Tibial artery (tissue), 4 donors: ENCODE measurements at regions of chr11 and their contacts with region 1.

Region 1: DNA sequence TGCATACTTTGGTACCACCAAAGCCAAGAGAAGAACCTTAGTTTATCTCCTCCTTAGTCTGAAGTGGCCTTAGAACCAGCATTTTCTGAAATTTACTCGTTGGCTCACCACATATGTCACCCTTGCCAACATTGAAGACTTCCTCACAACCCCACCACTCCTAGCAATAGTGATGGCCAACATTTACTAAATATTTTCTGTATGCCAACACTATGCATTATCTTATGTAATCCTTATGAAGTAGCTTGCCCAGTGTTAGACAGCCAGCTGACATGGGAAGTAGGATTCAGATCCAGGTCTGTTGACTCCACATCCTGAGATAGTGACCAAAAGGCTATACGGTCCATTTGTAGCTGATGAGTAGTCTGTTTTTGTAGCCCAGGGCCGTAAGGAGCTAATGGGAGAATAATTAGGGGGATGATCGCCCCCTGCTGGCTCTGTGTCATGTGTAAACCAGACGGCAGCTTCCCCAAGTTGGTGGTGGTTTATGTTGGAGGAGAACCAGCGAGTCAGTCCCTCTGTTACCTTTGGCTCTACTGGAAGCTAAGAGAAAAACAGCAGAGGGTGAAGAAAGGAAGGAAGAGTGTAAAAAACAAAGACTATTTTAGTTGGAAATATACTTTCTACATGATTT is 120.5 kb upstream of the RASSF10 start:
- DNase-seq: peak; percentile 94 to 95
- H3K4me3 ChIP-seq: peak overlapping the region in 1 of 2 donors; percentile 25
- H3K27ac ChIP-seq: peak overlapping the region; percentile 83 to 85
- H3K4me1 ChIP-seq: peaks cover 0 to 33% (median 27%) of the 10 kb centered on the region in 4 donors
- H3K27me3 ChIP-seq: no peaks in the 10 kb centered on the region
- CTCF ChIP-seq: peak; percentile 73 to 86

Region 2: GRCh38 chr11:12331239-12331874 is 557.3 kb before region 1 on chr11:
- intact Hi-C with region 1: loop called (anchors 2 kb)
- DNase-seq: peak; percentile 80 to 86
- H3K4me3 ChIP-seq: no peak overlapping the region
- H3K27ac ChIP-seq: no peak overlapping the region
- H3K4me1 ChIP-seq: peaks cover 0 to 8% (median 0%) of the 10 kb centered on the region in 4 donors
- H3K27me3 ChIP-seq: no peaks in the 10 kb centered on the region
- CTCF ChIP-seq: peak; percentile 74 to 90

Region 3: GRCh38 chr11:12599408-12600143 is 289.1 kb before region 1 on chr11:
- intact Hi-C with region 1: loop called (anchors 5 kb)
- DNase-seq: peak; percentile 35 to 70
- H3K4me3 ChIP-seq: no peak overlapping the region
- H3K27ac ChIP-seq: no peak overlapping the region
- H3K4me1 ChIP-seq: no peaks in the 10 kb centered on the region
- H3K27me3 ChIP-seq: no peaks in the 10 kb centered on the region
- CTCF ChIP-seq: peak; percentile 65 to 68

Region 4: GRCh38 chr11:12673924-12674570 is 214.6 kb before region 1 on chr11 and contains the start of gene TEAD1:
- intact Hi-C with region 1: loop called (anchors 2 kb)
- DNase-seq: peak; percentile 89 to 98
- H3K4me3 ChIP-seq: peak within 1 kb of the TSS; percentile 70 to 79
- H3K27ac ChIP-seq: peak within 1 kb of the TSS; percentile 88 to 91
- H3K4me1 ChIP-seq: peaks cover 0 to 29% (median 13%) of the 10 kb centered on the region in 4 donors
- H3K27me3 ChIP-seq: no peaks in the 10 kb centered on the region
- CTCF ChIP-seq: no peak

Region 5: GRCh38 chr11:12813371-12814225 is 75.0 kb before region 1 on chr11:
- intact Hi-C with region 1: loop called (anchors 10 kb)
- DNase-seq: no peak
- H3K4me3 ChIP-seq: no peak overlapping the region
- H3K27ac ChIP-seq: peak overlapping the region; percentile 31 to 51
- H3K4me1 ChIP-seq: peaks cover 4 to 47% (median 25%) of the 10 kb centered on the region in 4 donors
- H3K27me3 ChIP-seq: no peaks in the 10 kb centered on the region
- CTCF ChIP-seq: no peak